ENCODE measurements at regions of chr11 and their contacts with region 1.

Region 1: DNA sequence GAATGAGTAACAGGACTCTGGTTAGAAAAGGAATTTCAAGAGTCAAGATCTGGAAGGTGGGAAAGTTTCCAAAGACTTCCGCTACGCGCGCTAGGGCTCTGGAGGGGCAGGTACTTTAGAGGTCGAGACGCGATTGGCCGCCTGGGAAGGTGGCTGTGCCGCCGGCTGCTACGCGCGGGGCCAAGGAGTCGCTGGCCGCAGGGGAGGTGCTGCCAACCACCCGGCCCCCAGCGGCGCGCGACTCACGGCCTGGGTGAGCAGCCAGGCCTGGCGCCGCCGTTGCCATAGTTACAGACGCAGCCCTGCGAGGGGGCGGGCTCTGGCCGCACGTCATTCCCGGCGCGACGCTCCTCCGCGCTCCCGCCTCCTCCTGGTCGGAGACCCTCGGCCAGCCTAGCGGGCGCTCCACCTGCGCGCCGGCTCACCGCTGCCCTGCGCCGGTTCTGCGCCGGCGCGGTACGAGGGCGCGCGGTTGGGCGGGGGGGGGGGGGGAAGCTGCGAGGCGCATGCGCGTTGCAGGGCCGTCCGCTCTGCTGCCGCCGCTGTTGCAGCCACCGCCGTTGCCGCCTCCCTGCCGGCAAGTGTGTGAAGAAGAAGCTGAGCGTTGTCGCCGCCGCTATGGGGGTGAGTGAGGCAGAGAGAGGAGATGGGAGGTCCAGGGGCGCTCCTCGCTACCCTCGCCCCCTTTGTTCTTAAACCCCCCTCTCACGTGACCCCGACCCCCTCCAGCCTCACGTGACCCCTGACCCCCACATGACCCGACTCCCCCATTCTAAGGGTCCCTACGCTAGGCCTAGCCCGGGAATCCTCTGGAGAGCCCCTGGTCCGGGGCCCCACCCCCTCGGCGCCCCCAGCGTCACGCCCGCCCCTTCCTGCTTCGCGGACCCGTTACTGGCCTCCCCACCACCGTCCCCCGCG is at the start of gene NAA40:
- DNase-seq: peak; percentile 89
- H3K4me3 Mint-ChIP-seq: peak within 1 kb of the TSS; percentile 87
- H3K27ac Mint-ChIP-seq: peak within 1 kb of the TSS; percentile 82
- H3K4me1 Mint-ChIP-seq: peaks cover 7% of the 10 kb centered on the region
- H3K27me3 Mint-ChIP-seq: no peaks in the 10 kb centered on the region
- total RNA-seq, gene NAA40: 25.3 and 31.6 TPM in 2 replicates

Region 2: DNA sequence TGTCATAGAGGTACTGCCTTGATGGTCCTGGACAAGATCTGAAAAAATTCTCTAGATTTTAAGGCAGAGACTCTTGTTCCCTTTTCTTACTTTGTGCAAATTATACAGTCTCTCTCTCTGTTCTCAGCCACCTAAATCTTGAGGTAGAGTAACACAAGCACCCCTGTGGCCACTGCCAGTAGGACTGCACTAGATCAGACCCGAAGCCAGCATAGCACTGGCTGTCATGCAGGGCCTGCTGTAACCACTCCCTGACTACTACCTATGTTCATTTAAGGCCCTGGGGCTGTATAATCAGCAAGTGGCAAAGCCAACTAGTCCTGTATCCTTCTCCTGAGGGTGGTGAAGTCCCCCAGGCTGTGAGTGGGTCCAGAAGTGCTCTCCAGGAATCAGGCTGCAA is 782.9 kb before region 1 on chr11:
- intact Hi-C with region 1: no loop called
- DNase-seq: no peak
- H3K4me3 Mint-ChIP-seq: no peak overlapping the region
- H3K27ac Mint-ChIP-seq: no peak overlapping the region
- H3K4me1 Mint-ChIP-seq: no peaks in the 10 kb centered on the region
- H3K27me3 Mint-ChIP-seq: peaks cover 11% of the 10 kb centered on the region

Region 3: DNA sequence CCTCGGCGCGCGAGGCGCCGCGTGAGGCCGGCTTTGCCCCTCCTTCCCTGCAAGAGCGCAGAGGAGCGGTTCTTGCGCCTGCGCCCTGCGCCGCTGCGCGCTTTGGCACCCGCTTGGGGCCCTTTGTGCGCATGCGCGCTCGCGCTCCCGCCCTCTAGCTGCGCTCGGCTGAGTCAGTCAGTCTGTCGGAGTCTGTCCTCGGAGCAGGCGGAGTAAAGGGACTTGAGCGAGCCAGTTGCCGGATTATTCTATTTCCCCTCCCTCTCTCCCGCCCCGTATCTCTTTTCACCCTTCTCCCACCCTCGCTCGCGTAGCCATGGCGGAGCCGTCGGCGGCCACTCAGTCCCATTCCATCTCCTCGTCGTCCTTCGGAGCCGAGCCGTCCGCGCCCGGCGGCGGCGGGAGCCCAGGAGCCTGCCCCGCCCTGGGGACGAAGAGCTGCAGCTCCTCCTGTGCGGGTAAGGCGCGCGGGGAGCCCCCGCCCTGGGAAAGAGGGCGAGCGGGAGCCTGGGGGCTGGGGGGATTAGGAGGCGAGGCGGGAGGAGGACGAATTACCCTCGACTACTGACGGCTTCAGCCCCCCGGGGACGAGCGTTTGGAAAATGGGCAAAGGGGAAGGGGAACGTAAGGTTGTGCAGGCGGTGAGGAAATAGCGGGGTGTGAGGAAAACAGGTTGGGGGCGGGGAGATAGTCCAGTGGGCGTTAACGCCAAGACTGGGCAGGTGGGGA is 257.3 kb before region 1 on chr11 and contains the start of gene RTN3:
- intact Hi-C with region 1: loop called (anchors 2 kb)
- DNase-seq: peak; percentile 100
- H3K4me3 Mint-ChIP-seq: peak within 1 kb of the TSS; percentile 91
- H3K27ac Mint-ChIP-seq: peak within 1 kb of the TSS; percentile 91
- H3K4me1 Mint-ChIP-seq: peaks cover 32% of the 10 kb centered on the region
- H3K27me3 Mint-ChIP-seq: peaks cover 11% of the 10 kb centered on the region
- total RNA-seq, gene RTN3: 52.1 and 54.7 TPM in 2 replicates

Region 4: DNA sequence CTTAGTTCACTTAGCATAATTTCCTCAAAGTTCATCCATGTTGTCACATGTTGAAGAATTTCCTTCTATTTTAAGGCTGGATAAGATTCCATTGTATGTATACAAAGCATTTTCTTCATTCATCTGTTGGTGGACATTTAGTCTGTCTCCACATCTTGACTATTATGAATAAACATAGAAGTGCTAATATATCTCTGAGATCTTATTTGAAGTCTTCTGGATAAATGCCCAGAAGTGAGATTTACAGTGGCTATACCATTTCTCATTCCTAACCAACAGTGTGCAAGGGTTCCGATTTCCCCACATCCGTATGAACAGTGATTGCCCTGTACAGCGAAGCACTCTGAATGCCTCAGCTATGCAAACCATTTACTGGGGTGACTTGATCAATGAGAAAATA is 163.5 kb before region 1 on chr11:
- intact Hi-C with region 1: no loop called
- DNase-seq: no peak
- H3K4me3 Mint-ChIP-seq: no peak overlapping the region
- H3K27ac Mint-ChIP-seq: no peak overlapping the region
- H3K4me1 Mint-ChIP-seq: peaks cover 2% of the 10 kb centered on the region
- H3K27me3 Mint-ChIP-seq: peaks cover 50% of the 10 kb centered on the region

Region 5: GRCh38 chr11:63813035-63813562 is 125.6 kb before region 1 on chr11 and contains the start of gene SPINDOC:
- intact Hi-C with region 1: loop called (anchors 1 kb)
- DNase-seq: peak; percentile 78
- H3K4me3 Mint-ChIP-seq: peak within 1 kb of the TSS; percentile 88
- H3K27ac Mint-ChIP-seq: peak within 1 kb of the TSS; percentile 55
- H3K4me1 Mint-ChIP-seq: peaks cover 34% of the 10 kb centered on the region
- H3K27me3 Mint-ChIP-seq: no peaks in the 10 kb centered on the region
- total RNA-seq, gene SPINDOC: 60.0 and 64.3 TPM in 2 replicates

Region 6: GRCh38 chr11:63888170-63889086 is 50.3 kb before region 1 on chr11:
- intact Hi-C with region 1: loop called (anchors 1 kb)
- DNase-seq: peak; percentile 57
- H3K4me3 Mint-ChIP-seq: peak overlapping the region; percentile 86
- H3K27ac Mint-ChIP-seq: peak overlapping the region; percentile 83
- H3K4me1 Mint-ChIP-seq: peaks cover 77% of the 10 kb centered on the region
- H3K27me3 Mint-ChIP-seq: no peaks in the 10 kb centered on the region

Region 7: GRCh38 chr11:63951779-63952536 is 13.2 kb after region 1 on chr11:
- intact Hi-C with region 1: loop called (anchors 1 kb)
- DNase-seq: peak; percentile 38
- H3K4me3 Mint-ChIP-seq: peak overlapping the region; percentile 56
- H3K27ac Mint-ChIP-seq: peak overlapping the region; percentile 77
- H3K4me1 Mint-ChIP-seq: peaks cover 21% of the 10 kb centered on the region
- H3K27me3 Mint-ChIP-seq: no peaks in the 10 kb centered on the region

Region 8: DNA sequence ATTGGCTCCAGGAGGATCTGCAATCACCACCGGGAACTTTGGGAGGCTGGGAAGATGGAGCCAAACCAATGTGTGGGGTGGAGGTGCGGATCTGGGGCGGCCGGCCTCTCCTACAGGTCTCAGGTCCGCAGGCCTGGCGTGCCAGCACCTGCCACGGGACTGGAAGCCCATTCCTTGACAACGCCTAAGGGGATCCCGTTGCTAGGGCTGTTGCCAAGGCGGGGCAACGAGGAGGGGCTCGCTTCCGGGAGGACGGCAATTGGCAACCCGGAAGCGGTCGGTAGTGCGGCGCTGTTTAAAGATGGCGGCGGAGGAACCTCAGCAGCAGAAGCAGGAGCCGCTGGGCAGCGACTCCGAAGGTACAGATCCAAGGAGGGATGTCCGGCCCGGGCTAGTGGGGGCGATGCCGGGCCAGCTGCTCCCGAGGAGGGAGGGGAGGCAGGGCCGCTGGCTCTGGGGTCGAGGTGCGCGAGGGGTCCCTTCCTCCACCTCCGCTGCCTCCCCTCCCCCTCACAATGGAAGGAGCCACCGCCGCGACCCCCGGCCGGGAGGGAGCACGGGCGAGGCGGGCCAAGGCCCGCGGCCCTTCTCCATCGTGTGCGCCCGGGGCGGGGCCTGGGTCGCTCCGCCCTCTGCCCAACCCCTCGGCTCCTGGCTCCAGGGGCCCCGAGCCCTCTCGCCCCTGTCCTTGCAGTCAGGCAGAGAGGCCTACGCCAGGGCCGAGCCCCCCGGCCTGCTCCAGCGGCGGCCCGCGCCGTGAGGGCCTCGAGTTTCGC is 47.6 kb after region 1 on chr11 and contains the start of gene OTUB1:
- intact Hi-C with region 1: loop called (anchors 1 kb)
- DNase-seq: peak; percentile 86
- H3K4me3 Mint-ChIP-seq: peak within 1 kb of the TSS; percentile 97
- H3K27ac Mint-ChIP-seq: peak within 1 kb of the TSS; percentile 96
- H3K4me1 Mint-ChIP-seq: peaks cover 32% of the 10 kb centered on the region
- H3K27me3 Mint-ChIP-seq: no peaks in the 10 kb centered on the region
- total RNA-seq, gene OTUB1: 104 and 114 TPM in 2 replicates

Region 9: GRCh38 chr11:64436000-64436399 is 497.3 kb after region 1 on chr11:
- intact Hi-C with region 1: no loop called
- DNase-seq: no peak
- H3K4me3 Mint-ChIP-seq: no peak overlapping the region
- H3K27ac Mint-ChIP-seq: no peak overlapping the region
- H3K4me1 Mint-ChIP-seq: no peaks in the 10 kb centered on the region
- H3K27me3 Mint-ChIP-seq: peaks cover 13% of the 10 kb centered on the region

Measured in activated T-helper 1 cell treated with anti-CD3 and anti-CD28 coated beads, Interleukin-12 subunit alpha, Interleukin-12 subunit beta, Interleukin-2, Interleukin-4 antibody, amounts not matched to agents 30 ng/mL and 10 ng/mL and 1 ng/mL, durations not matched to agents 14 hours and 24 hours and 36 hours (primary cell).